CD4-positive, alpha-beta memory T cell (primary cell): ENCODE measurements at regions of chr7 and their contacts with region 1.

Region 1: DNA sequence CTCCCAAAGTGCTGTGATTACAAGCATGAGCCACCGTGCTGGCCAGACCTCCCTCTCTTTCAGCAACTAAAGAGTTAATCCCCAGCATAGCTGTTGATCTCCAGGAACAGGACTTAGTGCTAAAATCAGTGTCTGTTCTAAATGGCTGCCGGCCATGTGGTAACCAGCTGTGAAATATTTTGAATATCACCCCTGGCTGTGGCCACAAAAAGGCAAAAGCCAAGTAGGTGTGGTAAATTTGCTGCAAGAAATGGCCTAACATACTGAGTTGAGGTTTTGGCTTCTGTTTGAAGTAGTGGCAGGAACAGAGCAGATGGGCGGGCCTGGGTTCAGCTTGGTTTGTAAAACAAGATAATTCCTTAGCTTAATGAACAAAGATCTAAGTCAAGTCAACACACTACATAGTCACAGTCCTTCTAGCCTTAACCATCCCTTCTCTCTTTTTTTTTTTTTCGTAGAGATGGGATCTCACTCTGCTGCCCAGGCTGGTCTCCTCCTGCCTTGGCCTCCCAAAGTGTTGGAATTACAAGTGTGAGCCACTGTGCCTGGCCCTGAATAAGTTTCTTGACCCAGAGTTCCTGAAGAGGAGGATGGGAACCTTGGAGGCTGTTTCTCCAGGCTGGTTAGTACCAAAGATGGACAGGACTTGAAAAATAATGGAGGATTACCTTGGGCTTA is 22.7 kb upstream of the AGFG2 start:
- DNase-seq: peak; percentile 74 to 82 (median 80)
- H3K4me3 ChIP-seq: peak overlapping the region in 1 of 2 donors; percentile 33
- H3K4me3 Mint-ChIP-seq: peak overlapping the region; percentile 61 to 83 (median 78)
- H3K27ac ChIP-seq: peak overlapping the region; percentile 24
- H3K27ac Mint-ChIP-seq: peak overlapping the region; percentile 72 to 89 (median 82)
- H3K4me1 ChIP-seq: peaks cover 30% of the 10 kb centered on the region
- H3K4me1 Mint-ChIP-seq: peaks cover 21 to 47% (median 28%) of the 10 kb centered on the region in 4 donors
- H3K27me3 ChIP-seq: no peaks in the 10 kb centered on the region
- H3K27me3 Mint-ChIP-seq: no peaks in the 10 kb centered on the region

Region 2: GRCh38 chr7:100493476-100494264 is 22.6 kb before region 1 on chr7:
- CTCF ChIA-PET with region 1: interaction called, 11 read pairs
- POLR2A ChIA-PET with region 1: interaction called, 10 read pairs
- intact Hi-C with region 1: no loop called
- DNase-seq: peak; percentile 48 to 60 (median 54)
- H3K4me3 ChIP-seq: no peak overlapping the region
- H3K4me3 Mint-ChIP-seq: peak overlapping the region; percentile 71 to 84 (median 75)
- H3K27ac ChIP-seq: no peak overlapping the region
- H3K27ac Mint-ChIP-seq: peak overlapping the region in 3 of 7 donors; percentile 32 to 86 (median 84)
- H3K4me1 ChIP-seq: peaks cover 10% of the 10 kb centered on the region
- H3K4me1 Mint-ChIP-seq: peaks cover 3 to 29% (median 15%) of the 10 kb centered on the region in 4 donors
- H3K27me3 ChIP-seq: no peaks in the 10 kb centered on the region
- H3K27me3 Mint-ChIP-seq: peaks cover 0 to 2% of the 10 kb centered on the region in 2 donors

Region 3: GRCh38 chr7:100538654-100539435 is 22.6 kb after region 1 on chr7 and contains the start of gene AGFG2:
- CTCF ChIA-PET with region 1: interaction called, 4 read pairs
- POLR2A ChIA-PET with region 1: interaction called, 37 read pairs
- intact Hi-C with region 1: loop called (anchors 1 kb)
- DNase-seq: peak; percentile 100
- H3K4me3 ChIP-seq: peak within 1 kb of the TSS; percentile 33 to 79
- H3K4me3 Mint-ChIP-seq: peak within 1 kb of the TSS; percentile 88 to 99 (median 97)
- H3K27ac ChIP-seq: peak within 1 kb of the TSS; percentile 49
- H3K27ac Mint-ChIP-seq: peak within 1 kb of the TSS; percentile 84 to 95 (median 91)
- H3K4me1 ChIP-seq: peaks cover 42% of the 10 kb centered on the region
- H3K4me1 Mint-ChIP-seq: peaks cover 33 to 49% (median 41%) of the 10 kb centered on the region in 4 donors
- H3K27me3 ChIP-seq: no peaks in the 10 kb centered on the region
- H3K27me3 Mint-ChIP-seq: no peaks in the 10 kb centered on the region
- total RNA-seq, gene AGFG2: 56.6 to 58.3 TPM